Activated B cell treated with CpG ODN at 0.5 μM for 24 hours (primary cell): ENCODE measurements at regions of chr9 and their contacts with region 1.

Region 1: DNA sequence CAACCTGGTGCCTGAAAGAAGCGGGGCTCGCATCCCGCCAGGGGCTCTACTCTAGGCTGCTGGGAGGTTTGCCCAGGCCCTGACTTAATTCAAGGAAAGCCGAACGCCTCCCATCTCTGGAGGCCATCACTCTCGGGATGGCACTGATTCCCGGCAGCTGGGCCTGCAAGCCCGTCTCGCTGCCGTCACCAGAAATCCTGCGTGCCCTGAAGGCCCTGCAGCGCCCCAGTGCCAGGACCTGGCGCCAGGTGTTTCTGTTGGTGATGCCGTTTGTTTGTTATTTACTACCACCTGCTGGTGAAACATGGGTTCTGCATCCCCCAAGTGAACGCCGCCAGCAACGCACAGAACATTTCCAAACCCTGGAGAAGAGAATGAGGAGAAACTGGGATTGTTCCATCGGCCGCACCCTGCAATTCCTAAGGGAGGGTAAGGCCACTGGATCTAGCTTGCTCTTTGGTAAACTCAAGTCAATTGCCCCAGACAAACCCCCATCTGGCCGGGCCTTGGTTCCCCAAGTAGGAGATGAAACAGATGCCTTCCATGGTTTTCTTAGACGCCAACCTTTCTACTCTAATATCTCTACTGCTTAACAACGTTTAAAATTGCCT is 77.9 kb downstream of the AK8 start:
- DNase-seq: peak; percentile 40
- ATAC-seq: peak; percentile 91
- H3K4me3 Mint-ChIP-seq: no peak overlapping the region
- H3K27ac Mint-ChIP-seq: no peak overlapping the region
- H3K4me1 Mint-ChIP-seq: peaks cover 13% of the 10 kb centered on the region
- H3K27me3 Mint-ChIP-seq: peaks cover 26% of the 10 kb centered on the region
- CTCF ChIP-seq: no peak

Region 2: GRCh38 chr9:131762356-131762932 is 1037.7 kb before region 1 on chr9:
- CTCF ChIA-PET with region 1: no interaction called
- POLR2A ChIA-PET with region 1: no interaction called
- intact Hi-C with region 1: loop called (anchors 2 kb)
- DNase-seq: peak; percentile 79
- ATAC-seq: peak; percentile 98
- H3K4me3 Mint-ChIP-seq: no peak overlapping the region
- H3K27ac Mint-ChIP-seq: no peak overlapping the region
- H3K4me1 Mint-ChIP-seq: no peaks in the 10 kb centered on the region
- H3K27me3 Mint-ChIP-seq: peaks cover 15% of the 10 kb centered on the region
- CTCF ChIP-seq: peak; percentile 66

Region 3: GRCh38 chr9:132651254-132651653 is 148.9 kb before region 1 on chr9:
- CTCF ChIA-PET with region 1: no interaction called
- POLR2A ChIA-PET with region 1: no interaction called
- intact Hi-C with region 1: loop called (anchors 1 kb)
- DNase-seq: no peak
- ATAC-seq: no peak
- H3K4me3 Mint-ChIP-seq: no peak overlapping the region
- H3K27ac Mint-ChIP-seq: no peak overlapping the region
- H3K4me1 Mint-ChIP-seq: no peaks in the 10 kb centered on the region
- H3K27me3 Mint-ChIP-seq: no peaks in the 10 kb centered on the region
- CTCF ChIP-seq: no peak

Region 4: GRCh38 chr9:132768932-132769905 is 30.9 kb before region 1 on chr9:
- CTCF ChIA-PET with region 1: interaction called, 3 read pairs
- POLR2A ChIA-PET with region 1: no interaction called
- intact Hi-C with region 1: loop called (anchors 1 kb)
- DNase-seq: peak; percentile 50
- ATAC-seq: peak; percentile 76
- H3K4me3 Mint-ChIP-seq: peak overlapping the region; percentile 100
- H3K27ac Mint-ChIP-seq: peak overlapping the region; percentile 98
- H3K4me1 Mint-ChIP-seq: peaks cover 22% of the 10 kb centered on the region
- H3K27me3 Mint-ChIP-seq: no peaks in the 10 kb centered on the region
- CTCF ChIP-seq: no peak

Region 5: DNA sequence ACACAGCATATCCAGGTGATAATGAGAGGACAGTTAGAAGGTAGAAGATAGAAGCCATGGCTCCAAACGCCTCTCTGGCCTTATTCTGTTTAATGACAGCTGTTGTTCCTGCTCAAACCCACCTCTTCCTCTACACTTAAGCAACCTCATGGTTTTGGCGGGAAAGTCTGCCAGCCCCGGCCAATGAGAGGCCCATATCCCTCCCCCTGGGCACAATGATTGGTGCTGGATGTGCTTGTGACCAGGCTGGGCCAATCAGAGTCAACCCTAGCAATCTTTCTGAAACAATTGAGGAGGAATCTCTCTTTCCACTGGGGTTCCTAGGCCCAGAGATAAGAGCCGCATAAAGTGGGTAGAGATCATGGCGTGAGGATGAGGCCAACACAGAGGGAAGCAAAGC is 173.6 kb after region 1 on chr9:
- CTCF ChIA-PET with region 1: no interaction called
- POLR2A ChIA-PET with region 1: no interaction called
- intact Hi-C with region 1: loop called (anchors 5 kb)
- DNase-seq: no peak
- ATAC-seq: no peak
- H3K4me3 Mint-ChIP-seq: no peak overlapping the region
- H3K27ac Mint-ChIP-seq: no peak overlapping the region
- H3K4me1 Mint-ChIP-seq: peaks cover 13% of the 10 kb centered on the region
- H3K27me3 Mint-ChIP-seq: peaks cover 18% of the 10 kb centered on the region
- CTCF ChIP-seq: no peak